ENCODE measurements at regions of chr19 and their contacts with region 1.

Region 1: GRCh38 chr19:1652471-1653299 is at the start of gene TCF3:
- DNase-seq: peak; percentile 99
- ATAC-seq: peak; percentile 94
- H3K4me3 Mint-ChIP-seq: peak within 1 kb of the TSS; percentile 88
- H3K27ac Mint-ChIP-seq: peak within 1 kb of the TSS; percentile 91
- H3K4me1 Mint-ChIP-seq: peaks cover 32% of the 10 kb centered on the region
- H3K27me3 Mint-ChIP-seq: no peaks in the 10 kb centered on the region
- total RNA-seq, gene TCF3: 115 to 133 TPM

Region 2: DNA sequence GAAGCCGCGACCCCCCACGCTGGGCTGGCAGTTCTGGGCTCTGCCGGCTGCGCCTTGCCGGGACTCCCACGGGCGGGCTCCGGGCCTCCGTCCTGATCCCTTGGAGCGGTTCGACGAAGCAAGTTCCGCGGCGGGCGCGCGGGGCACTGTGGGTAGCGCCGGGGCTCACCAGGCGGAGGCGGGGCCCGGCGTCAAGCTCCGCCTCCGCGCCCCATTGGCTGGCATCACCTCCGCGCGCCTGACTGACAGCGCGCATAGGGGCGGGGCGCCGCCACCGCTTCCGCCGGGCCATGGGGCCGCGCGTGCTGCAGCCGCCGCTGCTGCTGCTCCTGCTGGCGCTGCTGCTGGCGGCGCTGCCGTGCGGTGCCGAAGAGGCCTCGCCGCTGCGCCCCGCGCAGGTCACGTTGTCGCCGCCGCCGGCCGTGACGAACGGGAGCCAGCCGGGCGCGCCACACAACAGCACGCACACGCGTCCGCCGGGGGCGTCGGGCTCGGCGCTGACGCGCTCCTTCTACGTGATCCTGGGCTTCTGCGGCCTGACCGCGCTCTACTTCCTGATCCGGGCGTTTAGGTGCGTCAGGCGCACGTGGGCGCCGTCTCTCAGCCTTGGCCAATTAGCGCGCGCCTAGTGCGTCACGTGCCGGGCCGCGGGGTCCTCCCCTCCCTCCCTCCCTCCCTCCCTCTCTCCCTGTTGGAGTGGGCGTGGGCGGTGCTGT is 377.3 kb before region 1 on chr19 and contains the start of gene FAM174C:
- CTCF ChIA-PET with region 1: no interaction called
- POLR2A ChIA-PET with region 1: no interaction called
- intact Hi-C with region 1: loop called in 1 of 2 experiments (anchors 1 kb)
- DNase-seq: peak; percentile 99
- ATAC-seq: peak; percentile 82
- H3K4me3 Mint-ChIP-seq: peak within 1 kb of the TSS; percentile 83
- H3K27ac Mint-ChIP-seq: peak within 1 kb of the TSS; percentile 95
- H3K4me1 Mint-ChIP-seq: peaks cover 54% of the 10 kb centered on the region
- H3K27me3 Mint-ChIP-seq: no peaks in the 10 kb centered on the region
- total RNA-seq, gene FAM174C: 75.3 to 88.3 TPM

Region 3: GRCh38 chr19:1438035-1438932 is 214.4 kb before region 1 on chr19 and contains the start of gene RPS15:
- CTCF ChIA-PET with region 1: no interaction called
- POLR2A ChIA-PET with region 1: interaction called, 3 read pairs
- intact Hi-C with region 1: loop called in 1 of 2 experiments (anchors 1 kb)
- DNase-seq: peak; percentile 98
- ATAC-seq: peak; percentile 86
- H3K4me3 Mint-ChIP-seq: peak within 1 kb of the TSS; percentile 94
- H3K27ac Mint-ChIP-seq: peak within 1 kb of the TSS; percentile 99
- H3K4me1 Mint-ChIP-seq: peaks cover 34% of the 10 kb centered on the region
- H3K27me3 Mint-ChIP-seq: no peaks in the 10 kb centered on the region
- total RNA-seq, gene RPS15: 1,716 to 1,858 TPM

Region 4: GRCh38 chr19:1568320-1569019 is 84.2 kb before region 1 on chr19 and contains the start of gene MEX3D:
- CTCF ChIA-PET with region 1: no interaction called
- POLR2A ChIA-PET with region 1: no interaction called
- intact Hi-C with region 1: loop called in 1 of 2 experiments (anchors 1 kb)
- DNase-seq: peak; percentile 90
- ATAC-seq: peak; percentile 88
- H3K4me3 Mint-ChIP-seq: no peak within 1 kb of the TSS
- H3K27ac Mint-ChIP-seq: no peak within 1 kb of the TSS
- H3K4me1 Mint-ChIP-seq: no peaks in the 10 kb centered on the region
- H3K27me3 Mint-ChIP-seq: peaks cover 7% of the 10 kb centered on the region
- total RNA-seq, gene MEX3D: 6.2 to 6.7 TPM

Region 5: DNA sequence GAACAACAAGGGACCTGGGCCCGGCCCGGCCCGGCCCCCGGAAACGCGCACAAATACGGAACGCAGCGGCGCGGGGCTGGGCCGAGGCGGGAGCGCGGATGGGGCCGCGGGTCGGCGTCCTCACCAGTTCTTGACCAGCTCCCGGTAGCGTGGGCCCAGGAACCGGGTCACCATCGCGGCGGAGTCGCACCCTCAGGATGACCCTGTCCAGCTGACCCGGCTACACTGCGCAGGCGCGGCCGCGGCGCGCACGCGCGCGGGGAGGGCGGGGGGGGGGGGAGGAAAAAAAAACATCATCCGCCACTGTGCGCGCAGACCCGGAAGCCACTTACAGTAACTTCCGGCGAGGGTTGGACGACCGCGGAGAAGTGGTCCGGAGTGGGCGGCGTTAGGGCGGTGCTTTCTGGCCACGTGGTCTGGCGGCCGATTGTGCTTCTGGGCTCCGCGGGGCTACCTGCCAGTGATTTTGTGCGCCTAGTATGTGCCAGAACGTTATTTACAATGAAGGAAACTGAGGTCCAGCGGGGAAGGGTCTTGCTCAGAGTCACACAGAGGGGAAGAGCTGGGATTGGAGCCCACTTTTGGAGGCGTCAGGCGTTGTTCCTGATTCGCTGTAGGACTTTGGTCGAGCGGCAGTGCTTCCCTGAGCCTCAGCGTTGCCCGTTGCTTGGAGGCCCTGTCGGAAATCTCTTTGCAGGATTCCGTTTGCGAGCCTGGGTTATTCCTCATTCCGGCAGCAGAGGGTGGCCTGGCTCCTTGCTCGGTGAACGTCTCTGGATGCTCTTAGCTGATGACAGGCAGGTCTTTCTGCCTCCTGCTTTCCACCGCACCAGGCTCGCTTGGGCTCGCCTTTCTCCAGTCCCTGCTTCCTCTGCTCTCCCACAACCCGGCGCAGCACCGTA is 47.2 kb before region 1 on chr19 and contains the start of gene UQCR11:
- CTCF ChIA-PET with region 1: interaction called, 6 read pairs
- POLR2A ChIA-PET with region 1: interaction called, 10 read pairs
- intact Hi-C with region 1: loop called (anchors 1 kb)
- DNase-seq: peak; percentile 96
- ATAC-seq: peak; percentile 89
- H3K4me3 Mint-ChIP-seq: peak within 1 kb of the TSS; percentile 97
- H3K27ac Mint-ChIP-seq: peak within 1 kb of the TSS; percentile 99
- H3K4me1 Mint-ChIP-seq: peaks cover 52% of the 10 kb centered on the region
- H3K27me3 Mint-ChIP-seq: no peaks in the 10 kb centered on the region
- total RNA-seq, gene UQCR11: 152 to 226 TPM

Region 6: DNA sequence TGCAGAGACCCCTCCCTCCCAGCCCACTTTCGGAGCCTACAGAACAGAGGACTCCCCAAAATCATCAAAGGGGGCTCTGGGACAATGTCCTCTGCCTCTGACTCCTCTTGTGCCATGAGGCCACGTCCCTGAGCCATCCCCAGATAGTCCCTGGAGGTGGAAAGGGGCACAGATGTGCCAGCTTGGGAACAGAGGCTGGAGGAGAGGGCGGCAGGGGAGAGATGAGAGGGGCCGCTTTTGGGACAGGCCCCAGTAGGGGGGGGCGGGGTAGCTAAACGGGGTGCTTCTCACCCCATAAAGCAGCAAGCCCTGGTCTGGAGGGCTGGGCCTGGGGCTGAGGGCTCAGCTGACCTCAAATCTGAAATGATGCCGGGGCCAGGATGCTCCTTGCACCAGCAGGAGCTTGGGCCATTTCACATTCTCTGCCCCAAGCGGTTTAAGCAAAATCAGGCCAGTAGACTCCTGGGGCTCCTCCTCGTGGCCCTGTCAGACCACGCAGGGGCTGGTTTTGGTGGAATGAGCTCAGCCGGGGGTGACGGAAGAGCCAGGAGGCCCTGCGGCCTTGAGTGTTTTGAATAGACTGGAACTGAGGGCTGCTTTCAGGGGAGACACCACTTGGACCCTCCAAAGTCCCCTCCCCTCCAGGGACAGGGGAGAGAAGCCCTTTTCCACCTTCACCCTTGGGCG is 127.7 kb after region 1 on chr19:
- CTCF ChIA-PET with region 1: no interaction called
- POLR2A ChIA-PET with region 1: no interaction called
- intact Hi-C with region 1: no loop called
- DNase-seq: no peak
- ATAC-seq: no peak
- H3K4me3 Mint-ChIP-seq: no peak overlapping the region
- H3K27ac Mint-ChIP-seq: no peak overlapping the region
- H3K4me1 Mint-ChIP-seq: peaks cover 2% of the 10 kb centered on the region
- H3K27me3 Mint-ChIP-seq: peaks cover 45% of the 10 kb centered on the region

Region 7: GRCh38 chr19:1848399-1849131 is 195.9 kb after region 1 on chr19 and contains the start of gene REXO1:
- CTCF ChIA-PET with region 1: no interaction called
- POLR2A ChIA-PET with region 1: no interaction called
- intact Hi-C with region 1: loop called in 1 of 2 experiments (anchors 1 kb)
- DNase-seq: peak; percentile 98
- ATAC-seq: peak; percentile 72
- H3K4me3 Mint-ChIP-seq: peak within 1 kb of the TSS; percentile 92
- H3K27ac Mint-ChIP-seq: peak within 1 kb of the TSS; percentile 88
- H3K4me1 Mint-ChIP-seq: peaks cover 65% of the 10 kb centered on the region
- H3K27me3 Mint-ChIP-seq: no peaks in the 10 kb centered on the region
- total RNA-seq, gene REXO1: 39.3 to 49.8 TPM